Heart left ventricle (tissue), 16 donors: ENCODE measurements at regions of chr1 and their contacts with region 1.

Region 1: GRCh38 chr1:101520302-101520701 is 283.5 kb downstream of the S1PR1 start:
- DNase-seq: no peak
- ATAC-seq: peak in 2 of 4 donors; percentile 62 to 63
- H3K4me3 ChIP-seq: no peak overlapping the region
- H3K27ac ChIP-seq: no peak overlapping the region
- H3K4me1 ChIP-seq: no peaks in the 10 kb centered on the region
- H3K27me3 ChIP-seq: no peaks in the 10 kb centered on the region
- CTCF ChIP-seq: peak; percentile 42 to 67 (median 54)
- POLR2A ChIP-seq: no peak

Region 2: DNA sequence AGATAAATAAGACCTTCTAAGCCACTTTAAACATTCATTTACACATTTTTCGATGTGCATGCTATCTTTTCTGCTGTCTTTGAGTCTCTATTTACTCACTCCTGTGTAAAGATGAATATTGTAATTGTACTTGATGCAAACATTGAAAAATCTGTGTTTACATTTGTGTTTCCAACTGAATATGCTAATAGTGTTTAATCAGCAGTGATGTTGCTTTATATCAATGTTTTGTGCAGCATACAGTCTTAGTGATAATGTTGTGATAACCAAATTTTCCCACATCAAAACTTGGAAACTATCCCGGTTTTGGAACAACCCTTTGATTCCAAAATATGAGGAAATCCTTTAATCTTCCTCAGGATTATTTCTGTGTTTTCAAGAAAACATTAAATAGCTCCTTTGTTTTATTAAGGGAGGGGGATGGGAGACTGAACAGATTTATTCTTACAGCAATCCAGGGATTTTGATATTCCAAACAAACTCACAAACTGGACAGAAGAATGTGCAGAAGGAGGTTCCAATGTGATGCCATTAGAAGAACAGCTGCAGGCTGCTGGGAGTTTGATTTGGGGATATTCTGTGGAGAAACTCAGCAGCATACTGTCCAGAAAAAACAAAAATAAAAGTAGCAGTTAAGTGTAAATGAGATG is 35.5 kb before region 1 on chr1:
- intact Hi-C with region 1: no loop called
- DNase-seq: no peak
- ATAC-seq: peak in 2 of 4 donors; percentile 49 to 52
- H3K4me3 ChIP-seq: no peak overlapping the region
- H3K27ac ChIP-seq: peak overlapping the region in 1 of 12 donors; percentile 5
- H3K4me1 ChIP-seq: peaks cover 0 to 9% (median 0%) of the 10 kb centered on the region in 12 donors
- H3K27me3 ChIP-seq: no peaks in the 10 kb centered on the region
- CTCF ChIP-seq: no peak
- POLR2A ChIP-seq: no peak

Region 3: GRCh38 chr1:103461161-103462105 is 1941.1 kb after region 1 on chr1:
- intact Hi-C with region 1: loop called in 1 of 10 experiments (anchors 5 kb)
- DNase-seq: no peak
- ATAC-seq: no peak
- H3K4me3 ChIP-seq: no peak overlapping the region
- H3K27ac ChIP-seq: no peak overlapping the region
- H3K4me1 ChIP-seq: no peaks in the 10 kb centered on the region
- H3K27me3 ChIP-seq: no peaks in the 10 kb centered on the region
- CTCF ChIP-seq: peak in 11 of 12 donors; percentile 19 to 61 (median 40)
- POLR2A ChIP-seq: no peak

Region 4: GRCh38 chr1:103514920-103515503 is 1994.7 kb after region 1 on chr1:
- intact Hi-C with region 1: loop called in 1 of 10 experiments (anchors 10 kb)
- DNase-seq: no peak
- ATAC-seq: no peak
- H3K4me3 ChIP-seq: no peak overlapping the region
- H3K27ac ChIP-seq: no peak overlapping the region
- H3K4me1 ChIP-seq: no peaks in the 10 kb centered on the region
- H3K27me3 ChIP-seq: no peaks in the 10 kb centered on the region
- CTCF ChIP-seq: peak; percentile 52 to 77 (median 70)
- POLR2A ChIP-seq: no peak